PC-9 (cell line): ENCODE measurements at regions of chr22 and their contacts with region 1.

Region 1: GRCh38 chr22:28019881-28020871 is 101.1 kb upstream of the PITPNB start:
- DNase-seq: peak in 1 of 2 experiments; percentile 55
- H3K4me3 ChIP-seq: no peak overlapping the region
- H3K27ac ChIP-seq: no peak overlapping the region
- H3K4me1 ChIP-seq: peaks cover 10% of the 10 kb centered on the region
- H3K27me3 ChIP-seq: no peaks in the 10 kb centered on the region
- CTCF ChIP-seq: peak; percentile 96

Region 2: DNA sequence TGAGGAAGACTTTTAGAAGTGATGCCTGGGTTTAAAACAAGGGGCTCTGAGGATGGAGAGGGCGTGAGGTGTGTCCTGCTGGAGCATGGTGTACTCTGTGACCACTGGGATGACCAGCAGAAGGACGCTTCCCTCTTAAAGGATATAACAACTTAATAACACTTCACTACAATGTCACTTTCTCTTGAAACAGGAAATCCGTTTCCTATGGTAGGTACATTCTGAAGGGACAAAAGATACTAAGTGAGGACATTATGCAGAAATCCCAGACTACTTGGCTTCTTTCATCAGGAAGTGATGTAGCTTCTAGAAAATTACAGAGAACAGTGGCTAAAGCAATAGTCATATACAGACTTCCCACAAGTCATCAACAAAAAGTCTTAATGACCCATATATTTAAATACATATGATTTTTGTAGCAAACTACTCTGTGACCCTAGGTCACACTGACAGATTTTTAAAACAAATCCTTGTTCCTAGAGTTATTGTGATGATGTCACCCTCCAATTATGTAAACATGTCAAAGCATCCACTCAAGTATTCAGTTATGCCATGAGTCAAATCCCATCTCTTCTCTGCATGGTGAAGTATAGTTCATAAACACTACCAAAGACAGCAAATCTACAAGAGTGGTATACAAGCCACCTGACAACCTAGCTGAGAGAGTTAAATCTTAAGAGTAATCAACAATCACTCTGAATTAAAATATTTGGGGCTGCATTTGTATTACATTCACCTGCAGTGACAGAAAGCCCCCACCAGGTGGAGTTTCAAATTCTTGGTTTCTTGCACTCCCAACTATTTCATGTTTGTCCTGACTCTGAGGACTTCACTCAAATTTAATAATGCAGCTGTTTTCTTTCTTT is 134.0 kb before region 1 on chr22:
- CTCF ChIA-PET with region 1: interaction called, 10 read pairs
- POLR2A ChIA-PET with region 1: no interaction called
- intact Hi-C with region 1: no loop called
- DNase-seq: peak; percentile 9 to 70
- H3K4me3 ChIP-seq: no peak overlapping the region
- H3K27ac ChIP-seq: no peak overlapping the region
- H3K4me1 ChIP-seq: peaks cover 7% of the 10 kb centered on the region
- H3K27me3 ChIP-seq: no peaks in the 10 kb centered on the region
- CTCF ChIP-seq: peak; percentile 96

Region 3: DNA sequence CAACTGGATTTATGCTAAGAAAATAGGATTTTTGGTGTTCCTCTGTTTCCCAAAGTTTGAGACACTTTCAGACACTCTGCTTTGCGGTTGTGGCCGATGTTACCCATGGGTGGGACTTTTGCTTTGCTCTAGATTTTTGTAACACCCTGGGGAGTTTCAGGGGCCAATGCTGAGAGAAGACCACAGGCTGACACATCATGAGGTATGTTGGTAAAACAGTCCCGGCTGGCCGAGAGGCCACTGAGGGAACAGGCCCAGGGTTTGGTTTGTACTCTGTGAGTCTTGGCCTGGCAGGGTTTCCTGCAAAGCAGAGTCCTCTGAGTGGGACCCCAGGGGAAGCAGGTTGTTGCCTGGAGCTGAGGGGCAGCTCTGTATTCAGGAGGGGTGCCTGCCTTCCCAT is 22.6 kb before region 1 on chr22:
- CTCF ChIA-PET with region 1: no interaction called
- POLR2A ChIA-PET with region 1: no interaction called
- intact Hi-C with region 1: no loop called
- DNase-seq: no peak
- H3K4me3 ChIP-seq: no peak overlapping the region
- H3K27ac ChIP-seq: no peak overlapping the region
- H3K4me1 ChIP-seq: peaks cover 4% of the 10 kb centered on the region
- H3K27me3 ChIP-seq: no peaks in the 10 kb centered on the region
- CTCF ChIP-seq: no peak

Region 4: DNA sequence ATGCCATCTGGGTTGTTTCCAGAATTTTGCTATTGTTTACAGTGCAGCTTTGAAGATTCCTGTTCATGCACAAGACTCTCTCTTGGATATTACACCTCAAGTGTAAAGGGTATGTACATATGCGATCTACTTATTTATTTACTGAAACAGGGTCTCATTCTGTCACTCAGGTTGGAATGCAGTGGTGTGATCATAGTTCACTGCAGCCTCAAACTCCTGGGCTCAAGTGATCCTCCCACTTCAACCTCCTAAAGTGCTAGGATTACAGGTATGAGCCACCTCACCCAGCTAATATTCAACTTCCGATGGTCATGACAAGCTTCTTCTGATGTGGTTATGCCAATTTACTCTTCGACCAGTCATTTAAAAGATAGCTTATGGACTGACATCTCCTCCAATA is 57.0 kb after region 1 on chr22:
- CTCF ChIA-PET with region 1: no interaction called
- POLR2A ChIA-PET with region 1: no interaction called
- intact Hi-C with region 1: no loop called
- DNase-seq: no peak
- H3K4me3 ChIP-seq: no peak overlapping the region
- H3K27ac ChIP-seq: no peak overlapping the region
- H3K4me1 ChIP-seq: no peaks in the 10 kb centered on the region
- H3K27me3 ChIP-seq: no peaks in the 10 kb centered on the region
- CTCF ChIP-seq: no peak

Region 5: GRCh38 chr22:28442264-28442710 is 422.1 kb after region 1 on chr22:
- CTCF ChIA-PET with region 1: no interaction called
- POLR2A ChIA-PET with region 1: no interaction called
- intact Hi-C with region 1: loop called (anchors 5 kb)
- DNase-seq: peak; percentile 55 to 70
- H3K4me3 ChIP-seq: peak overlapping the region; percentile 59
- H3K27ac ChIP-seq: no peak overlapping the region
- H3K4me1 ChIP-seq: 0 out of 2 replicates have a peak, but pooled peaks cover 4% of the 10 kb centered on the region
- H3K27me3 ChIP-seq: no peaks in the 10 kb centered on the region
- CTCF ChIP-seq: peak; percentile 69

Region 6: GRCh38 chr22:28594797-28595462 is 574.8 kb after region 1 on chr22:
- CTCF ChIA-PET with region 1: no interaction called
- POLR2A ChIA-PET with region 1: no interaction called
- intact Hi-C with region 1: loop called (anchors 1 kb)
- DNase-seq: peak in 1 of 2 experiments; percentile 36
- H3K4me3 ChIP-seq: no peak overlapping the region
- H3K27ac ChIP-seq: no peak overlapping the region
- H3K4me1 ChIP-seq: no peaks in the 10 kb centered on the region
- H3K27me3 ChIP-seq: no peaks in the 10 kb centered on the region
- CTCF ChIP-seq: peak; percentile 81